Activated CD4-positive, alpha-beta memory T cell treated with anti-CD3 and anti-CD28 coated beads for 36 hours (primary cell): ENCODE measurements at regions of chr6 and their contacts with region 1.

Region 1: GRCh38 chr6:70369332-70369950 is 43.9 kb upstream of the FAM135A start:
- DNase-seq: peak; percentile 77
- H3K4me3 Mint-ChIP-seq: no peak overlapping the region
- H3K27ac Mint-ChIP-seq: no peak overlapping the region
- H3K4me1 Mint-ChIP-seq: no peaks in the 10 kb centered on the region
- H3K27me3 Mint-ChIP-seq: peaks cover 6% of the 10 kb centered on the region

Region 2: GRCh38 chr6:70221025-70221714 is 148.3 kb before region 1 on chr6:
- CTCF ChIA-PET with region 1: interaction called, 110 read pairs
- POLR2A ChIA-PET with region 1: no interaction called
- intact Hi-C with region 1: loop called (anchors 1 kb)
- DNase-seq: no peak
- H3K4me3 Mint-ChIP-seq: no peak overlapping the region
- H3K27ac Mint-ChIP-seq: no peak overlapping the region
- H3K4me1 Mint-ChIP-seq: peaks cover 2% of the 10 kb centered on the region
- H3K27me3 Mint-ChIP-seq: peaks cover 9% of the 10 kb centered on the region

Region 3: DNA sequence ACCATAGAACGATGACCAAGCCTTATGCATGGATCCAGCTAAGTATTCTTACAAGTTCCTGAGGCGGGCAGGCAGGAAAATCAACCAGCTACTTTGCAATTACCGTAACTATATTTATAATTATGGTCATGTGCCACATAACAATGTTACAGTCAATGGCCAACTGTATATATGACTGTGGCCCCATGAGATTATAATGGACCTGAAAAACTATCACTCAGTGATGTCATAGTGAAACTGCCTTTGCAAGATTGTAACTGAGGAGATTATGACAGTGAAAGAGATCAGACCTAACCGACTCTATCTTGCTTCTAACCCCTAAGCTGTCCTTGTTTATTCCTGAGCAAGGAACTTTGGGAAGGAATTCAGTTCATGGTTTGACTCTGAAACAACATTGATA is 10.8 kb after region 1 on chr6:
- CTCF ChIA-PET with region 1: interaction called, 21 read pairs
- POLR2A ChIA-PET with region 1: no interaction called
- intact Hi-C with region 1: no loop called
- DNase-seq: no peak
- H3K4me3 Mint-ChIP-seq: no peak overlapping the region
- H3K27ac Mint-ChIP-seq: no peak overlapping the region
- H3K4me1 Mint-ChIP-seq: no peaks in the 10 kb centered on the region
- H3K27me3 Mint-ChIP-seq: peaks cover 9% of the 10 kb centered on the region

Region 4: GRCh38 chr6:70413114-70413991 is 43.9 kb after region 1 on chr6 and contains the start of gene FAM135A:
- CTCF ChIA-PET with region 1: interaction called, 9 read pairs
- POLR2A ChIA-PET with region 1: no interaction called
- intact Hi-C with region 1: loop called (anchors 2 kb)
- DNase-seq: peak; percentile 98
- H3K4me3 Mint-ChIP-seq: peak within 1 kb of the TSS; percentile 88
- H3K27ac Mint-ChIP-seq: peak within 1 kb of the TSS; percentile 75
- H3K4me1 Mint-ChIP-seq: peaks cover 17% of the 10 kb centered on the region
- H3K27me3 Mint-ChIP-seq: no peaks in the 10 kb centered on the region
- total RNA-seq, gene FAM135A: 9.0 to 9.2 TPM

Region 5: GRCh38 chr6:70955441-70956190 is 586.2 kb after region 1 on chr6:
- CTCF ChIA-PET with region 1: interaction called, 15 read pairs
- POLR2A ChIA-PET with region 1: no interaction called
- intact Hi-C with region 1: no loop called
- DNase-seq: peak; percentile 91
- H3K4me3 Mint-ChIP-seq: peak overlapping the region; percentile 70
- H3K27ac Mint-ChIP-seq: no peak overlapping the region
- H3K4me1 Mint-ChIP-seq: peaks cover 11% of the 10 kb centered on the region
- H3K27me3 Mint-ChIP-seq: peaks cover 42% of the 10 kb centered on the region